ENCODE measurements at regions of chr20 and their contacts with region 1.

Region 1: DNA sequence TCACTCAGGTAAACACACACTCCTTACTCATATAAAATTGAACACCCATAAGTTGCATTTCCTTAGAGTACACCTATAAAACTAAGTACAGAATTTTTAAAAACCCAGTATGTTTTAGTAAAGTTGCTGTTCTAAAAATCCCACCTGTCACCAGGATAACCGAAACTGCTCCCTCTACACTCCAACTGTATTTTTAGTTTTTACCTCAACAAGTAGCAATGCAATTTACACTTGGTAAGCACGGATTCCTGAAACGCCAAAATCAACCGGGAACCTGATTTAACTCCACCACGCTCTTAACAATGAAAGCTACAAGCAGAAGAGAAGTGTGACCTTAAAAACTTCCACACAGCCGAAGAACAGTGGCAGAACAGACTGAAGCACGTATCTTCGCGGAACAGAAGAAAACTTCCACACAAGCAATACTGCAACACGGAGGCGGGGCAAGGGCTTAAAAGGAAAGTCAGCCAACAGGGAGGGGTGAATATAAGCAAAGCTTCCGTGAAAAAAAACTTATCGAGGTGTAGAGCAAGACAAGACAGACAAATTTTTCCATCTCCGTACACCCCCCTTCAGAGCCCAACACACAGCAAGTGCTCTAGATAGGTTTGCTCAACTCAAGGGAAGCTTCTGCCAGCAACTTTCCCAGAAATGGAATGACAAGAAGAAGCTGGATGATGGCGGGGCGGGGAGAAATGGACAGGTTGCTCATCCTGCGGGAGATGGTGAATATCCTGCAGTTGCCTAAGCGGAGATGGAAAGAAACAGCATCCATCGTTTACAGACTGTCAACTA is 1.4 kb downstream of the STAU1 start:
- DNase-seq: peak in 2 of 10 donors; percentile 33 to 36
- H3K4me3 ChIP-seq: peak overlapping the region; percentile 52 to 95 (median 80)
- H3K27ac ChIP-seq: peak overlapping the region in 50 of 59 donors; percentile 29 to 93 (median 84)
- H3K27me3 ChIP-seq: no peaks in the 10 kb centered on the region
- CTCF ChIP-seq: no peak

Region 2: GRCh38 chr20:49278036-49278817 is 91.5 kb after region 1 on chr20 and contains the start of gene ZNFX1:
- intact Hi-C with region 1: loop called (anchors 1 to 2 kb)
- DNase-seq: peak; percentile 97 to 99 (median 98)
- H3K4me3 ChIP-seq: peak within 1 kb of the TSS; percentile 56 to 100 (median 90)
- H3K27ac ChIP-seq: peak within 1 kb of the TSS; percentile 71 to 100 (median 98)
- H3K27me3 ChIP-seq: no peaks in the 10 kb centered on the region
- CTCF ChIP-seq: peak in 45 of 56 donors; percentile 1 to 57 (median 30)
- total RNA-seq, gene ZNFX1: 21.0 to 37.9 (median 26.1) TPM

Measured in dorsolateral prefrontal cortex (tissue), 120 donors.